ENCODE measurements at regions of chr5 and their contacts with region 1.

Region 1: GRCh38 chr5:180209137-180209581 is at the start of gene RASGEF1C:
- H3K4me3 Mint-ChIP-seq: peak within 1 kb of the TSS; percentile 66
- H3K27ac Mint-ChIP-seq: no peak within 1 kb of the TSS
- H3K4me1 Mint-ChIP-seq: peaks cover 16% of the 10 kb centered on the region
- H3K27me3 Mint-ChIP-seq: peaks cover 62% of the 10 kb centered on the region

Region 2: DNA sequence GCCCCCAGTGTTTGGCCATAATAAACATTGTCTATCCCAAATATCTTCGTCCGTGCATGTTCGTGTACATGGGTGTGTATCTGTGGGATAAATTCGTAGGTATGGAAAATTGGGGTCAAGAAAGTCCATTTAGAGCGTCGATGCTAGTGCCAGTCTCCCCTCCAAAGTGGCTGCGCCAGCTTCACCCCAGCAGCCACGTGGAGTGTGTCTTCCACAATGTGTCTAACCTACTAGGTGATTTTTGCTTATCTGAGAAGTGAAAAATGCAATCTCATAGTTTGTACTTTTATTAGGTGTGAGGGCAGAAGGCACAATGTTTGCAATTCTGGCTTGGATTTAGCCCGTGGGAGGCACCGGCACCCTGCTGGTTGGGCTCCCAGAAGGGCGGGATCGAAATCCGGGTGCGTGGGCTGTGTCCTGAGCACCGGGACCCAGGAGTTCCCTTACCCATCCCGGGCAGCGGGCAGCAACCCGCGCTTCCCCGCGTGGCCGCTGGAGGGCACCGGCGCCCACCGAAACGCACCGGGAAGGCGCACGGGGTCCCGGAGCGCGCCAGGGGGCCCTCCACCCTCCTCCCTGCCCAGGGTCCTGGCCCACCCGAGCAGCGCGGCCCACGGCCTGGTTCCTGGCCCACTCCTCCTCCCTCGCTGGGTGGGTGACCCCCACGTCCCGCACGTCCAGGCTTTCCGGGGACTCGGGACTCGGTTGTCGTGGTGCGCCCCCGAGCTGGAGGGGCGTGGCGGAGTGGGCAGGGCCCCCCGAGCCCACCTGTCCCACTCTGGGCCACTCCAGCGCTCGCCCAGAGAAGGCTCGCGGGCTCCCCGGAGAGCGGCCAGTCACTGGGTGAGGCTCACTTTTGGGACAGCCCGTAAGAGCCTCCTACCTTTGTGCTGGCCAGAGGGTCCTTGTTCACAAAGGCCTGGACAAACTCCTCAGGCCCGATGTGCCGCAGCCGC is 82.2 kb before region 1 on chr5:
- intact Hi-C with region 1: loop called (anchors 2 kb)
- H3K4me3 Mint-ChIP-seq: no peak overlapping the region
- H3K27ac Mint-ChIP-seq: no peak overlapping the region
- H3K4me1 Mint-ChIP-seq: no peaks in the 10 kb centered on the region
- H3K27me3 Mint-ChIP-seq: peaks cover 49% of the 10 kb centered on the region

Region 3: DNA sequence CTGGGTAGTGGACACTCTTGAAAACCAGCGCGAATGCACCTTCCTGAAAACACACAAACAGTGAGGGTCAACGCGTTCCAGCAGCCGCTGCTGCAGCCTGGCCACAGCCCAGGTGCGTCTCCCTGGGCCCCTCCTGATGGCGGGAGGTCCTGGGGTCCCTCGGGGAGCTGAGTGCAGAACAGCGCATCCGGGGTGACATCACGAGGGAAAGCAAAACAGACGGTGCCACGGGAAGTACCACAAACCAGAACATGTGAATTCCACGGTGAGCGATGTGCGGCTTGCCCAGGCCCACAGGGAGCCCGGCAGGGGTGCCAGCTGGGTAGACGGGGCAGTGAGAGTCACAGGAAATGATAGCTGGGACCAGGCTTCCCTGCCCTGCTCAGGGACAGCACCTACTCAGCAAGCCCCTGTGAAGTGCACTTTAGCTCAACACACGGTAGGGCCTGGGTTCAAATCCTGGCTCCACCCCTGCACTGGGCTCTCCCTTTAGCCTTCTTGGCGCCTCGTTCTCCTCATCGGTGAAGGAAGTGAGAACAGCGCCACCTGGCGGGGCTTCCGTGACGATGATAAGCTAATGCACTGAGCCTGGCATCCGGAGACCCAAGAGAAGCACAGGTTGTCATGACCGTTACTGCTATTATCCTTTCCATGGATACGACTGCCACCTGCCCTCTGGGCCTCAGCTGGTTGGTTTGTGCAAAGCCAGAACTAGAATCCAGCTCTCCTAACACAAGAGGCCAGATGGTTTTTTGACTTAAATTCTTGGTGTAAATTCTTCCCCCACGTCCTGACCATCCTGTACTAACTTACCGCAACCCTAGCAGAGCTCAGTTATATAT is 119.4 kb after region 1 on chr5:
- intact Hi-C with region 1: loop called (anchors 10 kb)
- H3K4me3 Mint-ChIP-seq: no peak overlapping the region
- H3K27ac Mint-ChIP-seq: no peak overlapping the region
- H3K4me1 Mint-ChIP-seq: no peaks in the 10 kb centered on the region
- H3K27me3 Mint-ChIP-seq: peaks cover 37% of the 10 kb centered on the region

Measured in dendritic cell treated with granulocyte-macrophage colony-stimulating factor and Interleukin-4, amounts not matched to agents 40 ng/mL and 50 ng/mL, for 4 days (primary cell).